GM18951 (cell line): ENCODE measurements at regions of chr9 and their contacts with region 1.

Region 1: DNA sequence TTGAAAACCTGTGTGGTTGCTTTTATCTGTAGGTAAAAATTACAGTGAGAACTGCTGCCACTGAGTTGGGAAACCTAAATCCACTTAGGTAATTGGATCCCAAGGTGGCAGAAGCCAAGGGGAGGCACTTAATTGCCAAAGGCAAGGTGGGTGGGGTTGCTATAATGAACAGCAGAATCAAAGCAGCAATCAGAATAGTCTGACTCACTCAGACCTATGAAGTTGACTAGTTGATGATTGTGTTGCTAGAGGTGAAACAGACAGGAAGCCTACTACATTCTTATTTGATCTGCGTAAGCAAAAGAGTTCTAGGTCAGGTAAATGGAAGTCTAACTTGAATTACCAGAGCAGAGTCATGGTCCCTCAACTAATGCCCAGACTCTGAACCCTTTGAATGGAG is 17.3 kb upstream of the BICD2 start:
- POLR2A ChIP-seq: no peak

Region 2: GRCh38 chr9:92716557-92716956 is 65.4 kb before region 1 on chr9:
- in situ Hi-C with region 1: loop called (anchors 10 kb)
- POLR2A ChIP-seq: no peak

Region 3: DNA sequence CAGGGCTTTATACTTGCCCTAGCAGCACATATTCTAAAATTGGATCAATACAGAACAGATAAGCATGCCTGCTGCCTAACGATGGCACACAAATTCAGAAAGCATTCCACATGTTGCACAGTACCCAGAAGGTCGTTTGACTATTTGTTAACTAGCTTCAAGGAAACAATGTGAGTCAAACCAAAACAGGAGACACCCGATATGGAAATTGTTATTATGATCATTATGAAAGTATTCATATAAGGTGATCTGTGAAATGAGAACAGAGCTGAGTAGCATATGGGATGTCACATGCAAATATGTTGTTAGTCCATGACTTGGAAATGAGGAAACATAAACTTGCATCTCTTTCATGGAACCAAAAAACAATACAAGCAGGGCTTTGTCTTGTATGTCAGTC is 39.0 kb after region 1 on chr9:
- in situ Hi-C with region 1: no loop called
- POLR2A ChIP-seq: no peak